Activated CD4-positive, alpha-beta T cell treated with anti-CD3 and anti-CD28 coated beads for 36 hours (primary cell): ENCODE measurements at regions of chr9 and their contacts with region 1.

Region 1: DNA sequence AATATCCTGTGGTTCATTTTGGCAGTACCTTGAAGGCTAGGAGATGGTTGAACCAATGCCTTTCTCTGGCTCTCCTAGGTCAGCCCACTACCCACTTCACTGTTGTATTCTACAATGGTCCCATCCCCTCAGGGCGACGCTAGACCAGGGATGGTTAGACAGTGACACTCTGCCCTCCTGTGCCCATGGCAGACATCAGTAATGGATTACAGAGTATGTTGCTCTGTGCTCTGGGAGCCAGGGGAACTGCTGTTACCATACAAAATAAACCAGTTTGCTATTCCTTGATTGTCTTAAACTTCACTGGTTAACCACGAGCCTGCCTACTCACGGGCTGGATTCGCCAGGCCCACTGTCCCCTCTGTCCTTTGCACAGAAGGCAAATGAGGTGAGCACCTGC is 33.7 kb downstream of the NCS1 start:
- DNase-seq: no peak
- ATAC-seq: no peak
- H3K4me3 Mint-ChIP-seq: no peak overlapping the region
- H3K27ac Mint-ChIP-seq: no peak overlapping the region
- H3K4me1 Mint-ChIP-seq: no peaks in the 10 kb centered on the region
- H3K27me3 Mint-ChIP-seq: no peaks in the 10 kb centered on the region

Region 2: DNA sequence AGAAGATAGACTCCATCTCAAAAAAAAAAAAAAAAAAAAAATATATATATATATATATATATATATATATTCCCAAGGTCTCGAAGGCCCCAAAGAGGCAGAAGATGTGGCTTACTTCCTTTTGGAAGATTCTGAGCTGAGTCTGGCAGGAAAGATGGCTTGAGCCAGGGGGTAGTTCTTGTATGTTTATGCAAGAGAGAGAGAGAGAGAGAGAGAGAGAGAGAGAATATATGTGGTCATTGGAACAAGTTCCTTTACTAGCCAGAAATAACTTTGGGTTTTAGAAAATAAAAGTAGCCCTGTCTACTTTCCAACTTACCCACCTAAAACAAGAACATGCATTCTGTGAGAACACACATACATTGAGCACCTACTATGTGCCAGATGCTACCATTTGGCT is 16.1 kb before region 1 on chr9:
- CTCF ChIA-PET with region 1: no interaction called
- POLR2A ChIA-PET with region 1: no interaction called
- intact Hi-C with region 1: loop called in 1 of 2 experiments (anchors 2 kb)
- DNase-seq: no peak
- ATAC-seq: no peak
- H3K4me3 Mint-ChIP-seq: no peak overlapping the region
- H3K27ac Mint-ChIP-seq: no peak overlapping the region
- H3K4me1 Mint-ChIP-seq: no peaks in the 10 kb centered on the region
- H3K27me3 Mint-ChIP-seq: no peaks in the 10 kb centered on the region